Lower lobe of right lung (tissue), 2 donors: ENCODE measurements at regions of chr1 and their contacts with region 1.

Region 1: DNA sequence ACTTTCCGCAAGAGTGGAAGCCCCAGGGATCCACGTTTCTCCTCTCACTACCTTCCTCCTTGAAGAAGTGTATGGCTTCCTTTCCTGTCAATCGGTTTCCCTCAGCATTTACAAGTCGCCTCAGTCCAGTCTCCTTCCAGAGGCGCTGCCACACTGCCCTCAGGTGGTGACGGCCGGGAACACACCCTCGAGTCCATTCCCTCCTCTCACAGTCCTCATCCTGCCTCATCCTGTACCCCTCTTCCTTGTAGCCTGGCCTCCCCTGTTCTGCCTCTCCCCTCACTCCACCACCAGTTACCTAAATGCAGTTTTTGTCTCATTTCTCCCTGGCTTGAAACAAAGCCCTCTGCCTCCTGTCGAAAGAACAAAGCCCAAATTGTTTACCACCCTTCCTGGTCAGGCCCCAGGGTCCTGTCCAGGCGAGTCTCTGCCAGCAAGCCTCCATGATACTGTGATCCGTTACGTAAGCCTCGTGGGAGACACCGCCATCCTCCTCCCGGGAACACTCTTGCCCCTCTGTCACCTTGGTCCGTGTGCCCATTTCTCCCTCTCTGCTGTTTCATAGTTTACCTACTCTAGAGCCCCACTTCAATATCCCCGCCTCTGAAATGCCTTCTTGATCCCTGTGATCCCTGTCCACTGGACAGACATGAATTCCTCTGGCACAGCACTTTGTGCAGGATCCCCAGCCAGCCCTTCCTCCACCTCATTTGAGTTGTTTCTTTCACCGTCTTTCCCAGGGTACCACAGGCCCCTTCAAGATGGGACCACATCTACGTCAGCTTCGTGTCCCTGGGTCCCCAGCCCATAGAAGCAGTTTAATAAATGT is 23.3 kb upstream of the LSM10 start:
- DNase-seq: peak; percentile 89
- ATAC-seq: peak; percentile 97
- H3K4me3 ChIP-seq: no peak overlapping the region
- H3K27ac ChIP-seq: peak overlapping the region; percentile 28
- H3K4me1 ChIP-seq: peaks cover 5% of the 10 kb centered on the region
- H3K27me3 ChIP-seq: no peaks in the 10 kb centered on the region
- CTCF ChIP-seq: peak; percentile 95

Region 2: GRCh38 chr1:36342481-36343478 is 78.3 kb before region 1 on chr1:
- intact Hi-C with region 1: loop called (anchors 5 kb)
- DNase-seq: peak; percentile 70
- ATAC-seq: peak; percentile 76 to 83
- H3K4me3 ChIP-seq: no peak overlapping the region
- H3K27ac ChIP-seq: peak overlapping the region; percentile 54
- H3K4me1 ChIP-seq: peaks cover 19% of the 10 kb centered on the region
- H3K27me3 ChIP-seq: no peaks in the 10 kb centered on the region
- CTCF ChIP-seq: peak; percentile 75